ENCODE measurements at regions of chr5 and their contacts with region 1.

Region 1: DNA sequence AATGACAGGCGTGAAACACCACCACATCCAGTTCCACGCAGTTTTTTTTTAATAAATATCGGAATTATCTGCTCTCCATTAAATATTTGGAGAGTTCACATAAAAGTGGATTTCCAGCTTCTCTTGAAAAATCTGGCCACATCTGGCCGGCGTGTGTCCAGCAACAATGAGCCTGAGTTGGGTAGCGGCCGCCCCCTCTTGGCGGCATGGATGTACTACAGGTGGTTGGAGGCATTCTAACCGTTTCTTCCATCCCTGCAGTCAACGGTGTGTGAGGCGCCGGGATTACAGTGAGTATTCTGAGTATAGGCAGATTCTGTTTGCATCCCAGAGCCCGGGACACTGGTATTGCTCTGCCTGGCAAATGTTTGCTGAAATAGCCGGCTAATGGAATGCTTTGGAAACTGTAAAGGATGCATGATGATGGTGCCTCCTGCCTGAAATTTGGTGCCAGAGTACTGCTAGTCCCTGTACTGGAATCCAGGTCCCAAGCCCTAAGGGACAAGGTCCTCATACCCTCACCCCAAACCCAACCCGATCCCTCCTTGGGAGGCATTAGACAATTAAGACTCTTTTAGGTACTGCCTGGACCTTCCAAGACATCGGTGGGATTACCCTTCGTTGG is 13.6 kb upstream of the GM2A start:
- DNase-seq: peak; percentile 81
- H3K4me3 ChIP-seq: peak overlapping the region; percentile 49
- H3K27ac ChIP-seq: peak overlapping the region; percentile 72
- H3K4me1 ChIP-seq: peaks cover 79% of the 10 kb centered on the region
- CTCF ChIP-seq: peak; percentile 99

Region 2: DNA sequence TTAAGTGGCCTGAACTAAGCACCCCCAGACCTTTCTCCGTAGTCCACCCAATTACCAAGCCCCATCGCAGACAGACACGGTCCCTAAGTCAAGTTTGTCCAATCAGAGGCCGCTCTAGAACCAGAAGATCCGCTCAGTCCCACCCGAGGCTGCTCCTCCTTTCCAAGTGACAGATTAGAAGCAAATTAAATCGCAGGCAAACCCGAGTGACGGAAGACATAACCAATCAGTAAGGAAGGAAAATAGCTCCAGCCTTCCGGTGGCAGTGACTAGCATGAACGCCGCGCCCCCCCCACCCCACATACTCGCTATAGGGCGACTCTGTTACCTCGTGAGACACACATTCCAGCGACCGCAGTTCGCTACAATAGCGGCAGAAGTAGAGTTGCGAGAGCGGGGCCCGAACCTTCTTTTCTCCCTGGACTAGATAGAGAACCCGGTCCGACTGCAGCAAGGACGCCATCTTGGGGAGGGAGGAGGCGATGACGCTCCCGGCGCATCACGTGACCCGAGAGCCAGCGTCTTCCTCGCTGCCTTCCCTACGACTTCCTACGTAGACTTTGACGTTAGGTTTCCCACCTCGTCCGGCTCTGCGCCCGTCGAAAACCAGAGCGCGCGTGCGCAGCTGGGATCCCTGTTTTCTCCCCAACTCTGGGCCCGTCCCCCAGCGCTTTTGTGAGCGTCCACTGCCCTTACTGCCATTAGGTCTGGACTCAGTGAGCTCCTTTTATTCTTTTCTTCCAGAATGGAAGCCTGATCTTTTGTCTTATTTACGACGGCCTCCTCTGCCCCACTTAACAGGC is 480.6 kb before region 1 on chr5 and contains the start of gene DCTN4:
- CTCF ChIA-PET with region 1: no interaction called
- POLR2A ChIA-PET with region 1: no interaction called
- intact Hi-C with region 1: no loop called
- DNase-seq: peak; percentile 92
- H3K4me3 ChIP-seq: peak within 1 kb of the TSS; percentile 73
- H3K27ac ChIP-seq: peak within 1 kb of the TSS; percentile 70
- H3K4me1 ChIP-seq: peaks cover 8% of the 10 kb centered on the region
- CTCF ChIP-seq: no peak
- total RNA-seq, gene DCTN4: 12.6 and 18.9 TPM in 2 replicates

Region 3: DNA sequence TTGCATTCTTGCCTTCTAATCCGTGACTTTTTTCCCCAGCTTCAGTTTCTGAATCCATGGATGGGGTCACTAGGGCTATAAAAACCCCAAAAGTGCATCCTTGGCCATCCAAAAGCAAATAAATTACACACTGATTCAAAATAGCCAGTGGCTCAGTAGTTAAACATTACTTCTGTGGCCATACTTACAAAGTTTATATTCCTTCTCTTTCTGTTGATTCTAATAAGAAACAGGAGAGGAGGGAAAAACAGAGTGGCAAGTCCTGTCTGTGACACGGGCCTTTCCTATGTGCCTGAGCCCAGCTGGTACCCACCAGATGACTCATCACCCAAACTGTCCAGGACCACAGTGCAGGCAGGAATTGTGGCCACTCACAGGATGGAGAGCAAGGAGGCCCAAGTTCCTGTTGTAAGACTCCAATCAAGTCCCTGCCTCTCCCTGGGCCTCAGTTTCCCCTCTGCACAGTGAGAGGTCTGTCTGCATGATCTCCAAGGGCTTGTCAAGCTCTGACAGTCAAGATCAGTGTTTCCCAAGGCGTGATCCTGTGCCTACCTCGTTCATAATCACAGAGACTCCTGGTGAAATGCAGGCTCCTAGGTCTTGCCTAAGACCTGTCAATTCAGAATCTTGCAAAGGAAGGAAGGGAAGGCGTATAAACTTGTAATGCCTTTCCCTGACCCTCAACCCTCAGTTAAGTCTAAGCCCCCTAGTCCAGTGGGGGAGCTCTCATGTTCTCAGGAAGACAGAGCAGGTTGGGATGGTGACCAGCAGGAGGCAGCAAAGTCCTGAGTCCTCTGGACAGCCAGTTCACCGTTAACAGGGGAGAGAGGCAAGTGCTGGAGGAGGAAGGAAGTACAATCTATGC is 188.1 kb before region 1 on chr5:
- CTCF ChIA-PET with region 1: interaction called, 3 read pairs
- POLR2A ChIA-PET with region 1: no interaction called
- intact Hi-C with region 1: loop called (anchors 1 kb)
- DNase-seq: peak; percentile 87
- H3K4me3 ChIP-seq: no peak overlapping the region
- H3K27ac ChIP-seq: no peak overlapping the region
- H3K4me1 ChIP-seq: peaks cover 7% of the 10 kb centered on the region
- CTCF ChIP-seq: peak; percentile 97

Region 4: GRCh38 chr5:151150471-151151262 is 88.7 kb before region 1 on chr5:
- CTCF ChIA-PET with region 1: interaction called, 7 read pairs
- POLR2A ChIA-PET with region 1: interaction called, 11 read pairs
- intact Hi-C with region 1: no loop called
- DNase-seq: peak; percentile 81
- H3K4me3 ChIP-seq: peak overlapping the region; percentile 31
- H3K27ac ChIP-seq: peak overlapping the region; percentile 90
- H3K4me1 ChIP-seq: peaks cover 79% of the 10 kb centered on the region
- CTCF ChIP-seq: no peak

Region 5: GRCh38 chr5:151196556-151197290 is 42.6 kb before region 1 on chr5:
- CTCF ChIA-PET with region 1: no interaction called
- POLR2A ChIA-PET with region 1: interaction called, 6 read pairs
- intact Hi-C with region 1: loop called (anchors 1 kb)
- DNase-seq: peak; percentile 96
- H3K4me3 ChIP-seq: peak overlapping the region; percentile 25
- H3K27ac ChIP-seq: peak overlapping the region; percentile 92
- H3K4me1 ChIP-seq: peaks cover 55% of the 10 kb centered on the region
- CTCF ChIP-seq: no peak

Region 6: DNA sequence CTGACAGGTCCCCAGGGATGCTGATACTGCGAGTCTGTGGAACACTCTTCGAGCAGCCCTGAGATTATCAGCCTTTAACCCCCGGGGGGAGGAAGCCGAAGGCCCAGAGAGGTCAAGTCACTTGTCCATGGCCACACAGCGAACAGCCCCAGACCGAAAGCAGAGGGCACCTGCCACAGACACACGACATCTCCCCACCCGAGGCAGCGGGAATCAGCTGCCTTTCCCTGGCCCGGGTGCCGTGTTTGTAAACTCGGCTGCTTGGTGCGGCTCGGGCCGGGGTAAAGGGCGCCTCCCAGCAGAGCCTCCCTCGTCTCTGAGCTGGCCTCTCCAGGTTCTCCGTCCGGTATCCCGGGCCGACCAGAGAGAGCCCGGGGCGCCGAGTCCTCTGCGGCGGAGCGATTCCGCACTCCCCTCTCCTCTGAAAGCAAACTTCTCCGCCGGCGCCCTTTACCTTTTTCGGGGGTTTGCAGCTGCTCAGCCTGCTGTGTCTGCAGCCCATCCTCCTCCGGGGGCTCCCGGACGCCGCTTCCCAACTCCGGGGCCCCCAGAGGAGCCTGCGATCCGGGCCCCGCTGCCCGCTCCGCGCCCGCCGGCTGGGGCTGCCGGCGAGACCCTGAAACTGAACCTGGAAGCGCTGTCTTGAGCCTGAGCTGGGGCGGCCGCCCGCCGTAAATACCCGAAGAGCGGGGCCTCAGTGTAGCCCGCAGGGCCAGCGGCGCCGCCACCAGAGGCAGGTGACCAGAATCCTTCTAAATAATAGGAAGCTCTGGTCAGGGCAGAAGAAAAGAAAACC is 15.7 kb before region 1 on chr5 and contains the start of gene CCDC69:
- CTCF ChIA-PET with region 1: interaction called, 18 read pairs
- POLR2A ChIA-PET with region 1: interaction called, 272 read pairs
- intact Hi-C with region 1: loop called (anchors 1 kb)
- DNase-seq: peak; percentile 79
- H3K4me3 ChIP-seq: peak within 1 kb of the TSS; percentile 84
- H3K27ac ChIP-seq: peak within 1 kb of the TSS; percentile 98
- H3K4me1 ChIP-seq: peaks cover 77% of the 10 kb centered on the region
- CTCF ChIP-seq: peak; percentile 40
- total RNA-seq, gene CCDC69: 111 and 123 TPM in 2 replicates